Activated CD4-positive, alpha-beta memory T cell treated with anti-CD3 and anti-CD28 coated beads for 36 hours (primary cell): ENCODE measurements at regions of chr4 and their contacts with region 1.

Region 1: GRCh38 chr4:137819964-137820383 is 287.7 kb upstream of the PCDH18 start:
- DNase-seq: no peak
- H3K4me3 Mint-ChIP-seq: no peak overlapping the region
- H3K27ac Mint-ChIP-seq: no peak overlapping the region
- H3K4me1 Mint-ChIP-seq: no peaks in the 10 kb centered on the region
- H3K27me3 Mint-ChIP-seq: no peaks in the 10 kb centered on the region

Region 2: GRCh38 chr4:137768196-137768595 is 51.8 kb before region 1 on chr4:
- CTCF ChIA-PET with region 1: no interaction called
- POLR2A ChIA-PET with region 1: no interaction called
- intact Hi-C with region 1: no loop called
- DNase-seq: no peak
- H3K4me3 Mint-ChIP-seq: no peak overlapping the region
- H3K27ac Mint-ChIP-seq: no peak overlapping the region
- H3K4me1 Mint-ChIP-seq: no peaks in the 10 kb centered on the region
- H3K27me3 Mint-ChIP-seq: no peaks in the 10 kb centered on the region

Region 3: DNA sequence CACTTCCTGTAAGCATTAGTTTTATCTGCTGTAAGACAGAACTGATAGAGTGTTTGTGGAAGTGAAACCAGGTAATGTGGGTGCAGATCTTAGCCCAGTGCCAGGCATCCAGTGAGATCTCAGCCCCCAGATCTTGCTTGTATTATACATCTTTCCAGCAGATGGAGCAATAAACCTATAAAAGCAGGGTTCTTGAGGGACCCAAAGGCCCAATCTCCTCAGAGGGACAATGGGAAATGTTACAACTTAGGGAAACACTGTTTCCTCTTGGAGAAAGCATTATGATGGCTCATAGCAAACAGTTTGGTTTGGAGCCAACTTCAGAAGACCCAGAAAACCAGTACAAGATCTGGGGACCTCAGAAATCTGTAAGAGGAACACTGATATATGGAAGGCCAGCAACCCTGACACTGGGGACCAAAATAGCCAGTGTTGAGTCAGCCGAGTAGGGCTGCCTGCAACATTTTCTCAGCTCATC is 215.8 kb after region 1 on chr4:
- CTCF ChIA-PET with region 1: no interaction called
- POLR2A ChIA-PET with region 1: no interaction called
- intact Hi-C with region 1: loop called (anchors 10 kb)
- DNase-seq: no peak
- H3K4me3 Mint-ChIP-seq: no peak overlapping the region
- H3K27ac Mint-ChIP-seq: no peak overlapping the region
- H3K4me1 Mint-ChIP-seq: no peaks in the 10 kb centered on the region
- H3K27me3 Mint-ChIP-seq: no peaks in the 10 kb centered on the region